ENCODE measurements at regions of chr12 and their contacts with region 1.

Region 1: DNA sequence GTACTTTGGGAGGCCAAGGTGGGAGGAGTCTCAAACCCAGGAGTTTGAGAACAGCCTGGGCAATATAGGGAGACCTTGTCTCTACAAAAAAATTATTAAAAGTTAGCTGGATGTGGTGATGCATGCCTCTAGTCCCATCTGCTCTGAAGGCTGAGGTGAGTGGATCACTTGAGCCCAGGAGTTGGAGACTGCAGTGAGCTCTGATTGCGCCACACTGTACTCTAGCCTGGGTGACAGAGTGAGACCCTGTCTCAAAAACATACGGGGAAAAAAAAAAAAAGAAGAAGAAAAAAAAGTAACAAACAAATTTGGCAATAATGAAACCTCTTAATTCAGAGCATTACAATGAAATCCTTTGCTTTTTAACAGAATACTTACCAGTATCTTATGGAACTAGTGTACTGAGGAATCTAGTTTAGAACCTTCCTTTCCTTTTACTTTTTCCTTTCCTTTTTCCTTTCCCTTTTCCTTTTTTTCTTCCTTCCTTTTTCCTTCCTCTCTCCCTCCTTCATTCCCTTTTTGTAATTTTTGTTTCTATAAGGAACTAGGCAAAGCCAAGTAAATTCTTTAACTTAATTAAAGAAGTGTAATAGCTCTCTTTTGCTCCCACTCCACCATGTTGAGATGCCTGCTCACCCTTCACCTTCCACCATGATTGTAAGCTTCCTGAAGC is 12.2 kb upstream of the CNOT2 start:
- DNase-seq: no peak
- H3K4me3 ChIP-seq: no peak overlapping the region
- H3K4me3 Mint-ChIP-seq: no peak overlapping the region
- H3K27ac Mint-ChIP-seq: no peak overlapping the region
- H3K4me1 ChIP-seq: no peaks in the 10 kb centered on the region
- H3K4me1 Mint-ChIP-seq: no peaks in the 10 kb centered on the region
- H3K27me3 ChIP-seq: no peaks in the 10 kb centered on the region
- H3K27me3 Mint-ChIP-seq: no peaks in the 10 kb centered on the region
- CTCF ChIP-seq: no peak

Region 2: GRCh38 chr12:70052931-70053497 is 178.1 kb before region 1 on chr12:
- CTCF ChIA-PET with region 1: no interaction called
- POLR2A ChIA-PET with region 1: interaction called, 14 read pairs
- intact Hi-C with region 1: no loop called
- DNase-seq: peak; percentile 73 to 74
- H3K4me3 ChIP-seq: no peak overlapping the region
- H3K4me3 Mint-ChIP-seq: no peak overlapping the region
- H3K27ac Mint-ChIP-seq: peak overlapping the region; percentile 58
- H3K4me1 ChIP-seq: peaks cover 27% of the 10 kb centered on the region
- H3K4me1 Mint-ChIP-seq: peaks cover 27% of the 10 kb centered on the region
- H3K27me3 ChIP-seq: no peaks in the 10 kb centered on the region
- H3K27me3 Mint-ChIP-seq: no peaks in the 10 kb centered on the region
- CTCF ChIP-seq: no peak

Region 3: GRCh38 chr12:70319605-70320004 is 88.5 kb after region 1 on chr12:
- CTCF ChIA-PET with region 1: no interaction called
- POLR2A ChIA-PET with region 1: no interaction called
- intact Hi-C with region 1: no loop called
- DNase-seq: no peak
- H3K4me3 ChIP-seq: no peak overlapping the region
- H3K4me3 Mint-ChIP-seq: no peak overlapping the region
- H3K27ac Mint-ChIP-seq: no peak overlapping the region
- H3K4me1 ChIP-seq: no peaks in the 10 kb centered on the region
- H3K4me1 Mint-ChIP-seq: no peaks in the 10 kb centered on the region
- H3K27me3 ChIP-seq: no peaks in the 10 kb centered on the region
- H3K27me3 Mint-ChIP-seq: no peaks in the 10 kb centered on the region
- CTCF ChIP-seq: no peak